ENCODE measurements at regions of chr3 and their contacts with region 1.

Region 1: GRCh38 chr3:56702490-56703315 is 19.6 kb upstream of the TASOR start:
- DNase-seq: peak; percentile 76 to 90 (median 80)
- H3K4me3 ChIP-seq: no peak overlapping the region
- H3K27ac ChIP-seq: no peak overlapping the region
- H3K4me1 ChIP-seq: no peaks in the 10 kb centered on the region
- H3K27me3 ChIP-seq: no peaks in the 10 kb centered on the region

Region 2: DNA sequence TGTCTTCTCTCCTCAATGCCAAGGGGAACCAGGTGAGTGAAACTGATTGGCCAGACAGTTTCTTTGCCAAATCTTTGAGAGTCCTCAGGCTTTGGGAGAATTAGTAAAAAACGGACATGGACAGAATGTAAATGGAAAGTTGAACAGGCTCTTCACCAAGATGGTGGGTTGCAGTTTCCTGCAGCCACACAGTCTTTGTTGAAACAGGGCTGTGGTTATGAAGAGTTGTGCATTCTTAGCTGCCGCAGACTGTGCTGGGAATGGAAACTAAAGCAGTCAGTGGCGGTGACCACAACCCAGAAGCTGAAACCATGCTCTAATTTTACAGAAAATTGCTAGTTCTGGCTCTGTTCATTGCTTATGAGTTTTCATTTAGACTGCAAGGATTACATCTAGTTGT is 22.5 kb after region 1 on chr3:
- CTCF ChIA-PET with region 1: interaction called, 14 read pairs
- POLR2A ChIA-PET with region 1: no interaction called
- DNase-seq: peak in 2 of 3 donors; percentile 27 to 43
- H3K4me3 ChIP-seq: no peak overlapping the region
- H3K27ac ChIP-seq: no peak overlapping the region
- H3K4me1 ChIP-seq: peaks cover 0 to 5% (median 2%) of the 10 kb centered on the region in 4 experiments
- H3K27me3 ChIP-seq: no peaks in the 10 kb centered on the region